AG04449 (cell line): ENCODE measurements at regions of chr9 and their contacts with region 1.

Region 1: GRCh38 chr9:126704873-126705766 is 91.4 kb downstream of the LMX1B start:
- DNase-seq: no peak
- H3K4me3 ChIP-seq: peak overlapping the region; percentile 37
- CTCF ChIP-seq: peak; percentile 92

Region 2: GRCh38 chr9:126678989-126679388 is 26.1 kb before region 1 on chr9:
- CTCF ChIA-PET with region 1: interaction called, 10 read pairs
- POLR2A ChIA-PET with region 1: no interaction called
- DNase-seq: no peak
- H3K4me3 ChIP-seq: no peak overlapping the region
- CTCF ChIP-seq: no peak

Region 3: DNA sequence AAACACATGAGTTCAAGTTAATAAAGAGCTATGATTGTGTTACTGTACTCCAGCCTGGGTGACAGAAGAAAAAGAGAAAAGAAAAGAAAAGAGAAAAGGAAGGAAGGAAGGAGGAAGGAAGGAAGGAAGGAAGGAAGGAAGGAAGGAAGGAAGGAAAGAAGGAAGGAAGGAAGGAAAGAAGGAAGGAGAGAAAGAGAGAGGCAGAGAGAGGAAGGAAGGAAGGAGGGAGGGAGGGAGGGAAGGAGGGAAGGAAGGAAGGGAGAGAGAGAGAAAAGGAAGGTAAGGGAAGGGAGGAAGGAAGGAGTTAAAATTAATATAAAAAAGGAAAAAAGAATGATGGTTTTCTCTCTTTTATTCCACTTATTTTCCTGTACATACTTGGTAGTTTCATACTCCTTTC is 10.3 kb after region 1 on chr9:
- CTCF ChIA-PET with region 1: interaction called, 29 read pairs
- POLR2A ChIA-PET with region 1: no interaction called
- DNase-seq: no peak
- H3K4me3 ChIP-seq: no peak overlapping the region
- CTCF ChIP-seq: no peak

Region 4: DNA sequence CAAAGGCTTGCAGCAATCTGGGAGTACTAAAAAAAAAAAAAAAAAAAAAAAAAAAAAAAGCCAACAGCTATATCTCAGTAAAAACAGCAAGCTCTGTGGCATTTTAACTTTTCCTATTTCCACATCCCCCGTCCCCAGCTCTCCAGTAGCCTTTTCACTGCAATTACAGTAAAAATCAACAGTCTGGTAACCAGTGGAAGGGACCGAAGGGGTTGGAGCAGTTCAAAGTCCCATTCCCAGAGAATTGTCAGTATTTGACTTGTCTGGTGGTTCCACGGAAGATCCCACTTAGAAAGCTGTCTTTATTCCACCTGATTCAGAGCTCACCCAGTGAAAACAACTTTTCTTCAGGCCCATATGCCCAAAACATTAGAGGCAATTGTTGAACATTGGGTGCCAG is 27.9 kb after region 1 on chr9:
- CTCF ChIA-PET with region 1: interaction called, 42 read pairs
- POLR2A ChIA-PET with region 1: no interaction called
- DNase-seq: no peak
- H3K4me3 ChIP-seq: no peak overlapping the region
- CTCF ChIP-seq: no peak

Region 5: GRCh38 chr9:126781186-126782052 is 76.3 kb after region 1 on chr9:
- CTCF ChIA-PET with region 1: interaction called, 252 read pairs
- POLR2A ChIA-PET with region 1: no interaction called
- DNase-seq: no peak
- H3K4me3 ChIP-seq: peak overlapping the region; percentile 12
- CTCF ChIP-seq: peak; percentile 89